SK-MEL-5 (cell line): ENCODE measurements at regions of chr20 and their contacts with region 1.

Region 1: GRCh38 chr20:50645253-50646118 is 45.9 kb downstream of the RIPOR3 start:
- DNase-seq: peak; percentile 85

Region 2: DNA sequence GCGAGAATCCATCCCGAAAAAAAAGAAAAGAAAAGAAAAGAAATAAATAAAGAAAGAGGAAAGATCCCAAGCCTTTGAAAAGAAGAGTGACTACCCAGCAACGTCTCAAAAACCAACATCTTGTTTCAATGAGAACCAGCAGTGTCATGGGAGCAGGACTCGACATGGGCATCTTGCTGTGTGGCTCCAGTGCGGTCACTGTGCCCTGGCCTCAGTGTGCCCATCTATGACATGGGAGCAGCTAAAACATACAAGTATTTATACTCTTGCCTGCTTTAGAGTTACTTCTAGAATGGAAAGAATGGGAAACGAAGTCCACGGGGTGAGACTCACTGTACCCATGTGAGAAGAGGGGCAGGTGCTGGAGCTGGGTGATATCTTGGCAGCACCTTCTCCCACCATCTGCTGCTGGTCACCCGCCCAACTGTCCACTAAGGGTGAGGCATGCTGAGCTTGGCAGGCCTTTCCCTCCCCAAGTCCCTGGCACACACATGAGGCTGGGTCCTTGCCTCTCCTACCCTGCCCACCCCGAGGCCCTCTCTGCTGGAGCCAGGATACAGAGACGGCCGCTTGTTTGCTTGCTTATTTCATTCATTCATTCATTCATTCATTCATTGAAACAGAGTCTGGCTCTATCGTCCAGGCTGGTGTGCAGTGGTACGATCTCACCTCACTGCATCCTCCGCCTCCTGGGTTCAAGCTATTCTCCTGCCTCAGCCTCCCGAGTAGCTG is 31.9 kb before region 1 on chr20:
- in situ Hi-C with region 1: no loop called
- DNase-seq: no peak

Region 3: DNA sequence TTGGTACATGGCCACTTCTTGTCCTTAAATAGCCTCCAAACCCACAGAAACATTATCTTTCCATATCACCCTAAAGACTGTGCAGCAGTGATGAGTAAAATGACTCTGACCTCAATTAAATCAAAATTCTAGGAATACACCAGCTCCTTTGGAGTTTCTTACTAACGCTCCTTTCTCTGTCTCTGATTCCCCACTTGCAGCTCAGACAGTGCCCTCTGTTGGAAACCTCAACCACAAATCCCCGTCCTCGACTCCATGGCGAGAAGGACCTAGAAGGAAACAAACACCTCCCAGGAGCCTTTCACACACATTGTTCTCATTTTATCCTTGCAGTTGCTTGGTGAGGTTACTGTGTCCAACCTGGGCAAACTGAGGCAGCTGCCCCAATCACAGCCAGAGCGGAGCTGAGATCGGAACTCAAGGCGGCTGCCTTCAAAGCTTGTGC is 68.2 kb after region 1 on chr20:
- in situ Hi-C with region 1: loop called (anchors 10 kb)
- DNase-seq: peak; percentile 62